ENCODE measurements at regions of chr14 and their contacts with region 1.

Region 1: DNA sequence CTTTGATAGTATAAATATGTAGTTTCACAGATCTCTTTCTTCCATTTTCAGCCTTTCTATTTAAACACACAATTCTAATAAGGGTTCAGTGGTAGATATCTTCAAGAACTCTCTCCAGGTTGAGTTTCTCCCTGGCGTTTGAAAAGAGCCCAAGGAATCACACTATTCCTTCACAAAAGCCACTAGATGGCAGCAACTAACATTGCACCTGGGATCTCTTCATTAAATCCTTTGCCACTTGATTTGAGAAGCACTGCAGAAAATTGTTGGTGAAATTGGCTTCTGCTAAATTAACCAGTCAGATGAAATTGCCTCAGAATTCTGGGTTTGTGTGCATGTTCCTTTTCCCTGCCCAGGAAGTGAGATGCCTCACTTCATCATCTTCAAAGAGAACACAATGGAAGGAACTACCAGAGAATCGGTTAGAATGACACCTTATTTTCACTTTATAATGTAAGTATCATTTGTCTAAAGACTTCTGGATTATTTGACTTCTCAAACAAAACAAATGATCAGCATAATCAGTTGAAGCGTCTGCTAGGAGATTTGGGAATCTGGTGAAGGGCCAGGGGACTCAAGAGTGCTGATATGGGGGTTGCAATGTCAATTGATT is 6.8 kb downstream of the CCDC198 start:
- DNase-seq: no peak
- ATAC-seq: peak; percentile 64

Region 2: GRCh38 chr14:58072288-58073071 is 585.6 kb after region 1 on chr14:
- intact Hi-C with region 1: loop called (anchors 2 kb)
- DNase-seq: no peak
- ATAC-seq: peak; percentile 85